Gastrocnemius medialis (tissue), 4 donors: ENCODE measurements at regions of chr5 and their contacts with region 1.

Region 1: DNA sequence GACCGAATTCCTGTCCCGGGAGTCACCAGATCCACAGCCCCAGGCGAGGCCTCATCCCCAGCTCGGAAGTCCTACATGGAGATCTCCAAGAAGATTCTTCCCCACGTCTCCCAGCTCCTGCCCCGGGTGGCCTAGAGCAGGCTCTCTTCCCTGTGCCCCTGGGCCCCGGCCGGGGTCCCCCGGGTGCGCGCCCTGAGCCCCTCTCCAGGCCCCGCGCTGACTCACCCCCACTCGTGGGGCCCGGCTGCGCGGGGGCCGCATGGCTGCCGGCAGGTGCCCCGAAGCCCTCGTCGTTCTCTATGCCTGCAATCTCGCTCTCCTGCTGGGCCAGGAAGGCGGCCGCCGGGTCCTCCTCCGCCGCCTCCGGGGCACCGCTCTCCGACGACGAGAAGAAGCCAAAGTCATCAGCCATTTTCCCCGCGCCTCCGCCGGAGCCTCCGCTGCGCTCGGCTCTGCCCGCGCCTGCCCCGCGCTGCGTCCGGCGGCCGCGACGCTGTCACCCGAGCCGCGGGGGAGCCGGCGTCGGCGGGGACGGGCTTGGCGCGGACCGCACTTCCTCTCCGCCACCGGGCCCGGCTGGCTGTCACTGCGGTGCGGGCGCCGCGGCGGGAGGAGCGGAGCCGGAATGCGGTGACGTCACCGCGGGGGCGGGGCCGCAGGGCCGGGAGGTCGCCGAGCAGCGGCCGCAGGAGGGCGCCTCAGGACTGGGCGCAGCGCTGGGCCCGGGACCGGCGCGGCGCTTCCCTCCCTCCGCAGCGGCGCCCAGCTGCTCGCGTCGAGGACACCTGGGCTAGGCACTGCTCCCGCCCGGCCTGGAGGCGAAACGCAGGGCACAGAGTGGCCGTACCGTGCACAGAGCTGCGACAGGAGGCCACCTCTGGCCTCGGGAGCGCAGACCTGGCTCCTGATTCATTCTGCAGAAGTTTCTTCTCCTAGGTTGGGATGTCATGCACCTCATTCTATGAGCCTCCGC is at the start of gene CLTB:
- DNase-seq: peak; percentile 83 to 89
- ATAC-seq: peak; percentile 83 to 88
- H3K4me3 ChIP-seq: peak within 1 kb of the TSS; percentile 76 to 97 (median 92)
- H3K27ac ChIP-seq: peak within 1 kb of the TSS; percentile 88 to 99 (median 98)
- H3K4me1 ChIP-seq: peaks cover 39 to 41% of the 10 kb centered on the region in 2 donors
- H3K27me3 ChIP-seq: no peaks in the 10 kb centered on the region
- CTCF ChIP-seq: peak; percentile 53 to 93 (median 91)
- POLR2A ChIP-seq: peak; percentile 95 to 96
- total RNA-seq, gene CLTB: 261 to 386 (median 302) TPM

Region 2: DNA sequence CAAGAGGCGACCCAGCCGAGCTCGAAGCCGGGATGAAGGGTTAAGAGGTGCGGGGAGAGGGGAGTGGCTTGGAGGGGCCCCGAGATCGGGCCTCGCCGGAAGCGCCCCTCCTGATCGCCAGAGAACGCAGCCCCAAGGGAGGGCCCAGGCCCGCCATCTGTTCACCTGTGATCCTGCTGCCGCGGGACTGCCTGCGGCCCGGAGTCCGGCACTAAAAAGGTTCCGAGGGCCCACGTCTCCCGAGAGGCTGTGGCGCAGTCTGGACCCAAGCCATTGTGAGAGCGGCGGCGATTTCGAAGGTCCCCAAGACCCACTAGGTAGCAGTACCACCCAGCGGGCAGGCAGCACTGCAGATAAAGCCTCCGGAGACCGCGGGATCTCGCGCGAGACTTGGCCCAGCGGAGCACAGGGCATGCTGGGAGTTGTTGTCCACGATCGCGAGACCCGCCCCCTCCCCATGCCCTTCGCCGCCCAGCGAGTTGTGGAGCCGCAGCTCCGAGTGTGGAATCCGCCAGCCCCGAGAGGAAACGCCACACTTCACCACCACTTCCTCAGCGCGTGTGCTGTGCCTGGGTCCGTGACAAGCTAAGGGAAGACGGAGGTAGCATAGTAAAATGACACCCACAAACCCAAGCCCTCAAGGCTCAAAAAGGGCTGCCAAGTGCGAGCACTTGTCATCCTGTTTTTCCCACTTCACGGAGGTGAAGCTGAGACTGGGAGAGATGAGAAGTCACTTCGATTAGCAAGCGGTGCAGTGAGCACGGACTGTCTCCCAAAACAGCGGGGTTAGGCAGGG is 54.6 kb before region 1 on chr5 and contains the start of gene KIAA1191:
- in situ Hi-C with region 1: no loop called
- intact Hi-C with region 1: loop called (anchors 1 kb)
- DNase-seq: peak; percentile 94 to 96
- ATAC-seq: peak; percentile 85 to 87
- H3K4me3 ChIP-seq: peak within 1 kb of the TSS; percentile 83 to 99 (median 96)
- H3K27ac ChIP-seq: peak within 1 kb of the TSS; percentile 92 to 97 (median 94)
- H3K4me1 ChIP-seq: peaks cover 14 to 28% of the 10 kb centered on the region in 2 donors
- H3K27me3 ChIP-seq: no peaks in the 10 kb centered on the region
- CTCF ChIP-seq: peak in 2 of 5 experiments; percentile 34 to 51
- POLR2A ChIP-seq: peak; percentile 97 to 98
- total RNA-seq, gene KIAA1191: 76.3 to 174 (median 84.1) TPM

Region 3: GRCh38 chr5:176573564-176574296 is 157.5 kb after region 1 on chr5:
- in situ Hi-C with region 1: no loop called
- intact Hi-C with region 1: loop called (anchors 10 kb)
- DNase-seq: peak; percentile 36 to 43
- ATAC-seq: peak; percentile 84 to 93
- H3K4me3 ChIP-seq: no peak overlapping the region
- H3K27ac ChIP-seq: no peak overlapping the region
- H3K4me1 ChIP-seq: no peaks in the 10 kb centered on the region
- H3K27me3 ChIP-seq: peaks cover 2 to 3% (median 2%) of the 10 kb centered on the region in 3 donors
- CTCF ChIP-seq: peak; percentile 67 to 88 (median 84)
- POLR2A ChIP-seq: no peak

Region 4: DNA sequence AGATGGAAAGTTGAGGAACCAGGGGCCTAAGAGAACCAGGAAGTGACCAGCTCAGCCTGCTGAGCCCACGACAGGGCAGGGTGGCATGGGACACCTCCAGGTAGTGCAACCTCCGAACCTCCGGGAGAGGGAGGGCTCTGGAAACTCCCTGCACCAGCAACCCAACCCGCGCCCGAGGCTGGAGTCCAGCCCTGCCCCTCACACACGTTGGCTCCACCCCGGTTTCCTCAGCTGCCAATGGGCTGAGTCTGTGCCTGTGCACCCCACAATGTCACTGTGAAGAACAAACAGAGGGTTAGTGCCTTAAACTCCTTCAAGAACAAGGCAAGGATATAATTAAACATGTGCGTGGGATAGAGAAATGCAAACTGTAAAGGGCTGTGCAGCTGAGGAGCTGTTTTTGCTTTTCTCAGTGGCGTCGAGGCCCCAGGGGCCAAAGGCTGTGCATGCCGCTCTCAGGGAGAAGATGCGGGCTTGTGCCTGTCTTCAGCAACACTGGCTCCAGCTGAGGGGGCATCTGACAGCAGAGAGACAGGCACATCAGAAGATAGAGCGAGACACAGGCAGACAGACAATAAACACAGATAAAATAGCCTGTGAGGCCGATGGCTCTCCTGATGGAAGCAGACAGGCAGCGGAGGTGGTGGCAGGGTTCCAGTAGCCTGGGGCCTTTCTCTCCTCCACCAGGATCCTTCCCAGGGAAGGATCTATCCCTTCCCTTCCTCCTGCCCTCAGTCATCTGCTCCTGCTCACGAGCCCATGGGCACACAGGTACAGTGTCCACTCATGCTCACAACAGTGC is 377.3 kb after region 1 on chr5:
- in situ Hi-C with region 1: no loop called
- intact Hi-C with region 1: no loop called
- DNase-seq: no peak
- ATAC-seq: no peak
- H3K4me3 ChIP-seq: no peak overlapping the region
- H3K27ac ChIP-seq: no peak overlapping the region
- H3K4me1 ChIP-seq: no peaks in the 10 kb centered on the region
- H3K27me3 ChIP-seq: peaks cover 43 to 67% (median 53%) of the 10 kb centered on the region in 3 donors
- CTCF ChIP-seq: no peak
- POLR2A ChIP-seq: no peak